MCF 10A (cell line): ENCODE measurements at regions of chr1 and their contacts with region 1.

Region 1: GRCh38 chr1:156383023-156383422 is 14.0 kb downstream of the RHBG start:
- DNase-seq: peak; percentile 80
- H3K4me3 Mint-ChIP-seq: no peak overlapping the region
- H3K27ac Mint-ChIP-seq: no peak overlapping the region
- H3K4me1 Mint-ChIP-seq: peaks cover 11% of the 10 kb centered on the region
- H3K27me3 Mint-ChIP-seq: no peaks in the 10 kb centered on the region
- CTCF ChIP-seq: peak; percentile 94

Region 2: GRCh38 chr1:156001682-156002171 is 381.3 kb before region 1 on chr1:
- CTCF ChIA-PET with region 1: interaction called, 3 read pairs
- POLR2A ChIA-PET with region 1: no interaction called
- intact Hi-C with region 1: loop called (anchors 5 kb)
- DNase-seq: no peak
- H3K4me3 Mint-ChIP-seq: peak overlapping the region; percentile 74
- H3K27ac Mint-ChIP-seq: peak overlapping the region; percentile 94
- H3K4me1 Mint-ChIP-seq: peaks cover 38% of the 10 kb centered on the region
- H3K27me3 Mint-ChIP-seq: no peaks in the 10 kb centered on the region
- CTCF ChIP-seq: peak; percentile 14

Region 3: DNA sequence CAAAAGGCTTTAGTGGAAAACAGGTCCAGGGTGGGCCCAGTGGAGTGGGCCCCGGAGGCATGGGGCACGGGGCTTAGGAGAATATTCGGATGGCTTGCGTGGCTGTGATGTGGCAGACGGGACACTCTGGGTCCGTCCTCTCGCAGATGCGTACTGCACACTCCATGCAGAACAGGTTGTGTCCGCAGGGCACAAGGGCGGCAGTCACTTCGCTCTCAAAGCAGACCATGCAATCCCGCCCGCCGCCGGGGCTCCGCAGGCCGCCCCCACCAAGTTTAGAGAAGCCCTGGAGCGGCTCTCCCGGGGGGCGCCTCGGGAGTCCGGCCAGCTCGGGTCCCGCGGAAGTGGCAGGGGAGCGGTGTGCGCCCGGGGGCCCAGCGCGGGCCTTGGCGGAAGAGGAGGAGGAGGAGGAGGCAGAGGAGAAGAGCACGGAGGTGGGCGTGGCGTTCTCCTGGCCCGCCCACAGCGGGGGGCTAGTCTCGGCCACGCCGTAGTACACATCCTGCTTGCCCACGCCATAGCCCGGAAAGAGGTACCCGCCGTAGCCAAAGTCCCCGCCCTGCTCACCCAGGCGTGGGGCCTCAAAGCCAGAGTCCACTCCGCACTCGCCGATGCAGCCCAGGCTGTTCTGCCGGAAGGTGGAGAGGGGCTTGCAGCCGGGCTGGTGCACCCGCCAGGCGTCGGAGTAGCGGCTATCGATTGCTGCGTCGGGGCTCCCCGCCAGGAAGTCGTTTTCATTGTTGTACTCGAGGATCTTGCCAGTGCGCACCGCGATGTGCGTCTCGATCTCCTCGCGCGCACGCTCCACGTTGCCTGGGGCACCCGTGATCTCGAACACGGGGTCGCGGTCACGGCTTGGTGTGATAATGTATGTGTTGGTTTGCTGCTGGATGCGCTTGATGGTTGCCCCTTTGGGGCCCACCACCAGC is 306.3 kb before region 1 on chr1:
- CTCF ChIA-PET with region 1: no interaction called
- POLR2A ChIA-PET with region 1: no interaction called
- intact Hi-C with region 1: no loop called
- DNase-seq: no peak
- H3K4me3 Mint-ChIP-seq: no peak overlapping the region
- H3K27ac Mint-ChIP-seq: no peak overlapping the region
- H3K4me1 Mint-ChIP-seq: peaks cover 11% of the 10 kb centered on the region
- H3K27me3 Mint-ChIP-seq: no peaks in the 10 kb centered on the region
- CTCF ChIP-seq: no peak

Region 4: GRCh38 chr1:156212833-156213643 is 170.0 kb before region 1 on chr1 and contains the start of gene PMF1:
- CTCF ChIA-PET with region 1: no interaction called
- POLR2A ChIA-PET with region 1: no interaction called
- intact Hi-C with region 1: no loop called
- DNase-seq: peak; percentile 99
- H3K4me3 Mint-ChIP-seq: peak within 1 kb of the TSS; percentile 97
- H3K27ac Mint-ChIP-seq: peak within 1 kb of the TSS; percentile 96
- H3K4me1 Mint-ChIP-seq: peaks cover 21% of the 10 kb centered on the region
- H3K27me3 Mint-ChIP-seq: no peaks in the 10 kb centered on the region
- CTCF ChIP-seq: no peak
- total RNA-seq, gene PMF1: 51.0 and 77.7 TPM in 2 replicates

Region 5: GRCh38 chr1:156371553-156372264 is 11.3 kb before region 1 on chr1:
- CTCF ChIA-PET with region 1: interaction called, 121 read pairs
- POLR2A ChIA-PET with region 1: interaction called, 4 read pairs
- intact Hi-C with region 1: no loop called
- DNase-seq: peak; percentile 77
- H3K4me3 Mint-ChIP-seq: no peak overlapping the region
- H3K27ac Mint-ChIP-seq: no peak overlapping the region
- H3K4me1 Mint-ChIP-seq: peaks cover 6% of the 10 kb centered on the region
- H3K27me3 Mint-ChIP-seq: peaks cover 33% of the 10 kb centered on the region
- CTCF ChIP-seq: no peak

Region 6: GRCh38 chr1:156435545-156436141 is 52.6 kb after region 1 on chr1:
- CTCF ChIA-PET with region 1: interaction called, 119 read pairs
- POLR2A ChIA-PET with region 1: interaction called, 3 read pairs
- intact Hi-C with region 1: no loop called
- DNase-seq: no peak
- H3K4me3 Mint-ChIP-seq: no peak overlapping the region
- H3K27ac Mint-ChIP-seq: no peak overlapping the region
- H3K4me1 Mint-ChIP-seq: no peaks in the 10 kb centered on the region
- H3K27me3 Mint-ChIP-seq: peaks cover 99% of the 10 kb centered on the region
- CTCF ChIP-seq: no peak

Region 7: DNA sequence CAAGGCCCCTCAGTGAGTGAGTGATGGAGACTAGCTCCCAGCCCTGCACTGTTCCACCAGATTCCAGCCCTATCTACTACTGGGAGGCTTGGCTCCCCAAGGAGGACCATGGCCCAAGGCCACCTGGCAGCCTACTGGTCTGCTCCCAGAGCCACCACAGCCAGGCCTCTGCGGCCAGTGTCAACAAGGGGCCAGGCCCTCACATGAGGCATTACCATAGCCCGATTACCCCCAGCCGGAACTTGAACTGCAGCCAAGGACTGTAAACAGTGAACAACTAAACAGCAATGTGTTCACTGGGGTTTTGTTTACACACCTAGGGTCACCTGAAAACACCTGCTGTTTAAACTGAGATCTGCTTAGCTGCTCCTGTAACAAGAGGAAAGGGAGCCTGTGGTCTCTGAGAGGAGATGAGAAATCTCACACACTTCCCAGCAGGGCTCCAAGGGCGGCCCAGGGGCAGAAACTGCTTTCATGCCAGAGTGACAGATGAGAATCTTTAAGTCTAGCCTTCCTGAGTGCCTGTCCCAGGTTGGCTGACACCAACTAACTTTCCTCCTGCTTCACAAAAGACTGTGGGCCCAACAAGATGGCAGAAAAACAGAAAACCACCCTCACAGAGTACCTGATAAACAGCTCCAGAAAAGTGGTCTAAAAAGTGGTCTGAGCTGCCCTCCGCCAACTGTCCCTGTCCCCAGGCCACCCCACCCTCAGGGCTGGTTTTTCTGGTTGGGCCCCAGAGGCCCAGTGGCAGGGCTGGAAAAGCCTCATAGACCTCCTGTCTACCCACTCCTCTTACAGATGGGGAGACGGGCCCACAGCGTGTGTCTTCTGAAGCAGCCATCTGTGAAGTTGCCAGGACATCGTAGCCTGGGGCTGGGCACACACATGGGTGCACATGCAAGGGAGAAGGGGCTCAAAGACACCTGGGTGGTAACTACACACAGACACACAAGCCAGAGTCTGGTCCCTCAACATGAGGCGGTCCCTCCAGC is 88.8 kb after region 1 on chr1:
- CTCF ChIA-PET with region 1: interaction called, 12 read pairs
- POLR2A ChIA-PET with region 1: no interaction called
- intact Hi-C with region 1: no loop called
- DNase-seq: no peak
- H3K4me3 Mint-ChIP-seq: no peak overlapping the region
- H3K27ac Mint-ChIP-seq: no peak overlapping the region
- H3K4me1 Mint-ChIP-seq: peaks cover 8% of the 10 kb centered on the region
- H3K27me3 Mint-ChIP-seq: no peaks in the 10 kb centered on the region
- CTCF ChIP-seq: no peak

Region 8: GRCh38 chr1:156618853-156619581 is 236.0 kb after region 1 on chr1 and contains the start of gene HAPLN2:
- CTCF ChIA-PET with region 1: interaction called, 52 read pairs
- POLR2A ChIA-PET with region 1: interaction called, 3 read pairs
- intact Hi-C with region 1: no loop called
- DNase-seq: peak; percentile 57
- H3K4me3 Mint-ChIP-seq: no peak within 1 kb of the TSS
- H3K27ac Mint-ChIP-seq: no peak within 1 kb of the TSS
- H3K4me1 Mint-ChIP-seq: peaks cover 15% of the 10 kb centered on the region
- H3K27me3 Mint-ChIP-seq: peaks cover 54% of the 10 kb centered on the region
- CTCF ChIP-seq: peak; percentile 51
- total RNA-seq, gene HAPLN2: not detected in 2 replicates